ENCODE measurements at regions of chr9 and their contacts with region 1.

Region 1: DNA sequence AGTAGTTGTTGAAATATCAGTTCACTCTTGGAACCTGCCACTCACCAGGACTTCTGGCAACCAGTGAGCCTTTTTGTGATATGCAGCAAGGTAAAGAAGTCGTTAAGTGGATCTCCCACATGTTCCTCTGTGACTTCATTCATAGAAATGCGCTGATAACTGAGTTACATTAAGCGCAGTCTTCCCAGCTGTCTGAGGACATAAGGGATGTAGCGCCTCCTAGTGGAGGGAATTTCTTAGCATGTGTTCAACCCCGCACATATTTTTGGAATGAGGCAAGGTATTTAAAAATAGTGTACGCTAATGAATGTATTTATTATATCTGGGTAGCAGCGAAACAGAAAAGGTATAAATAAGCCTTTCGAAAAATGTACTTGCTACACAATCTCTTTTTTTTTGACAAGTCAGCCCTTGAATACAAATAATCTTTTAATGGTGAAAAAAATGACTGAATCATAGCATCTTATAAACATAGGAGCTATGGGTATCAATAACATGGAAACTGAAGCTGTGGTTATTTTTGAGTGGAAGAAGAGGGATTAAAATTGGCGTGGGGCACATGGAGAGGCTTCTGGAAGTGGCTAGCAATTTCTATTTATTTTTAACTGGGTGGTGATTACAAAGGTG is 38.0 kb downstream of the PALM2AKAP2 start:
- ATAC-seq: peak; percentile 57 to 85 (median 76)
- H3K4me3 ChIP-seq: no peak overlapping the region
- H3K27ac ChIP-seq: no peak overlapping the region
- H3K4me1 ChIP-seq: peaks cover 0 to 1% of the 10 kb centered on the region in 2 donors

Region 2: GRCh38 chr9:109574068-109574882 is 243.7 kb before region 1 on chr9:
- in situ Hi-C with region 1: loop called in 5 of 9 experiments (anchors 10 to 25 kb)
- ATAC-seq: peak; percentile 46 to 90 (median 68)
- H3K4me3 ChIP-seq: no peak overlapping the region
- H3K27ac ChIP-seq: no peak overlapping the region
- H3K4me1 ChIP-seq: no peaks in the 10 kb centered on the region

Region 3: GRCh38 chr9:109590945-109591344 is 227.0 kb before region 1 on chr9:
- in situ Hi-C with region 1: loop called in 4 of 9 experiments (anchors 25 kb)
- ATAC-seq: no peak
- H3K4me3 ChIP-seq: no peak overlapping the region
- H3K27ac ChIP-seq: no peak overlapping the region
- H3K4me1 ChIP-seq: no peaks in the 10 kb centered on the region

Region 4: DNA sequence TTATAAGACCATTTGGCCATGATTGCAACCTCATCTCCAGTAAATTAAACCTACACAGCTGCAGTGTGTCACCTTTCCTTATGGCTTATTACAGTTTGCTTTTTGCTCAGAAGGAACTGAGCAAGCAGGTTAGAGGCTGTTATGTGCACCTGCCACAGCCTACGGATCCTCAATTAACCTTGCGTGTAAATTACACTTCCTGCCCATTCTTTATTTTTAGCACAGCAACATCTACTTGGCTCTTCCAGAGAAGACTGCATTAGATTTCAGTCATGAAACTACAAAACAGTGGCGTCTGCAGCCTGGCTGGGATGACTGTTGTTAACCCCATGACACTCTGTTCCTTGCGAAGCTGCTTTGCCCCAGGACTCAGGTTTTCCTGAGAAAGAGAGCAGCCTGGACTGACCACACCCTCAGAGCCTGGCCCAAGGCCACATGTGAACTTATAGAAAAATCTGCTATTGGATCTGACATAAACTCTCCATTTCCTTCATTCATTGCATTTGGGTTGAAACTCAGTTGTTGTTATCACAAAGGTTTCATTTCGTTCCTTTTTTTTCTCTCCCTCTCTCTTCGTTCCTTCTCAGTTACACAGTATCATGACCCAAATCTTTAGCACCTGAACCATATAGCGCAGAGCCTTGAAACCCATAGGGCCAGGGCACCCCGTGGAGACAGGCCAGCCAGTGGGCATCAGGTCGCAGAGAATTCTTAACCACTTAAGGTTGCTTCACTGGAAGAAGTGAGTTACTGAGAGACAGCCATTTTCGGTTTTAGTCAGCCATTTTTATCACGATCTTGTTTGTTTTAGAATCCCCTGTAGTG is 100.6 kb after region 1 on chr9:
- in situ Hi-C with region 1: no loop called
- ATAC-seq: peak; percentile 54 to 93 (median 86)
- H3K4me3 ChIP-seq: no peak overlapping the region
- H3K27ac ChIP-seq: no peak overlapping the region
- H3K4me1 ChIP-seq: peaks cover 4 to 17% of the 10 kb centered on the region in 2 donors

Measured in motor neuron (in vitro differentiated cells).